GM10248 (cell line): ENCODE measurements at regions of chr15 and their contacts with region 1.

Region 1: DNA sequence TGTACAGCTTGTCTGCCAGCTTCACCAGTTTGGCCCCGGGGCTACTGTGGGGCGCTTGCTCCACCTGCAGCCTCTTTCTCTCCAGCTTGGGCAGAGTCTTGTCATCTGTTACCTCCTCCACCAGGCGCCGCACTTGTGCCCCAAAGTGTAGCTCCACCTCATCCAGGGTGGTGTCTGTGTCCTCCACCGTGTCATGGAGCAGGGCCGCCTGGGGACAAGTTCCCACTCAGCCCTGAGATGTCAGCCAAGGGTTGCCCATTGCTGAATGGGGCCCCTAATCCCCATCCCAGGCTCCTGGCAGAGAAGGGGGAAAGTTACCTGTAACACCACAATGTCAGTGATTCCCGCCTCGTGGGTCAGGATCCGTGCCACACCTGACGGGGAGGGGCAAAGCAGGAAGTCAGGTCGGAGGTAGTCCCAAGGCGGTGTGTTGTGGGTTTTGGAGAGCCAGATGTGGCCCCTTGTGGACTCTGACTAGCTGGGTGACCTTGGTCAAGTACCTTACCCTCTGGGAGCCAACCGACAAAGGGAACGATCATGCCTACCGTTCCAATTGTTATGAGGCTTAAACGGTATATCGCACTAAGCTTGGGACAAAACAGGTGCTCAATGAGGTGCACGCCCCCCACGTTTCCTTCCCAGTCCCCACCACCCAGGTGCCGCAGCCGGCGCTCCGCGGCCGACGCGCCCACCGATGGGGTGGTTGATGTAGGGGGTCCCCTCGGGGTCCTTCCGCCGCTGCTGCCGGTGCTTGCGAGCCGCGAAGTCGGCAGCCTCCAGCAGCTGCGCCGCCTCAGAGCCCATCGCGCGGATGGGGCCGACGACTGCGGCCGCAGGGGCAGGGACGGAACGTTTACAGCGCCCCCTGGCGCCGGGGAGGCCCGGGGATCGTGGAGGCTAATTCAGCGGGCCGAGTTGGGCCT is at the start of gene HDDC3:
- DNase-seq: peak; percentile 90
- CTCF ChIP-seq: peak; percentile 98

Region 2: GRCh38 chr15:90648137-90649070 is 283.6 kb before region 1 on chr15:
- CTCF ChIA-PET with region 1: interaction called, 29 read pairs
- POLR2A ChIA-PET with region 1: no interaction called
- DNase-seq: peak; percentile 75
- CTCF ChIP-seq: peak; percentile 79

Region 3: DNA sequence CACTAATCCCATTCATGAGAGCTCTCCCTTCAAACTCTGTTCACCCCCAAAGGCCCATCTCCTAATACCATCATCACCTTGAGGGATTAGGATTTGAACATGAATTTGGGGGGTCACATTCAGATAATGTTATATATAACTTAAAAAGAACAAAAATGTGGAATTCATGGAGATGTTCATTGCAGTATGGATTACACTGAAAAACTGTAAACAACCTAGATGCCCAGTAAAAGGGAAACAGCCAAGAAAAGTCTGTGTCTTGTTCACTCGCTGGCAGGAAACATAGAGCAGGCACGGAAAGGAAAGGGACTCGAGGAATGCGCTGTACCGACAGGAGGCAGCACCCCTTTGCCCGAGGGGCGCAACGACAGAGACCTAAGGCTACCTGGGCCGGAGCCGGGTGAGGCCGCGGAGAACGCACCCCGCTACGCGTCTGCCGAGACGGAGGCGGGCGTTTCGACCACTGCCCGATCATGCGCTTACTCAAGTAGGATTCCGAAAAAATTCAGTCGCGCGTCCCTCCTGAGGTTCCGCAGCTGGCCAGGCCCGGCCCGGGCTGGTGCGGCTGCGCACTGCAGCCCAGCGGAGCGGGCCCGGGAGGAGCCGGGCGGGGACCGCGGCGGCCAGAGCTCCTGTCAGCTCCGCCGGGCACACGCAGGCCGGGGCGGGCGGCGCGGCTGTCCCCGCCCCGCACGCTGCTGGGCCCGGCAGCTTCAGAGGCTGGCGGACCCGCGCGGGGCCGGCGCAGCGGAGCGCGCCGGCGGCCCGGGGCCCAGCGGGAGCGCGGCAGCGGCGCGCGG is 29.8 kb before region 1 on chr15:
- CTCF ChIA-PET with region 1: interaction called, 211 read pairs
- POLR2A ChIA-PET with region 1: interaction called, 7 read pairs
- DNase-seq: peak; percentile 92
- CTCF ChIP-seq: peak; percentile 86

Region 4: GRCh38 chr15:90970274-90970673 is 38.3 kb after region 1 on chr15:
- CTCF ChIA-PET with region 1: interaction called, 19 read pairs
- POLR2A ChIA-PET with region 1: interaction called, 7 read pairs
- DNase-seq: no peak
- CTCF ChIP-seq: no peak

Region 5: DNA sequence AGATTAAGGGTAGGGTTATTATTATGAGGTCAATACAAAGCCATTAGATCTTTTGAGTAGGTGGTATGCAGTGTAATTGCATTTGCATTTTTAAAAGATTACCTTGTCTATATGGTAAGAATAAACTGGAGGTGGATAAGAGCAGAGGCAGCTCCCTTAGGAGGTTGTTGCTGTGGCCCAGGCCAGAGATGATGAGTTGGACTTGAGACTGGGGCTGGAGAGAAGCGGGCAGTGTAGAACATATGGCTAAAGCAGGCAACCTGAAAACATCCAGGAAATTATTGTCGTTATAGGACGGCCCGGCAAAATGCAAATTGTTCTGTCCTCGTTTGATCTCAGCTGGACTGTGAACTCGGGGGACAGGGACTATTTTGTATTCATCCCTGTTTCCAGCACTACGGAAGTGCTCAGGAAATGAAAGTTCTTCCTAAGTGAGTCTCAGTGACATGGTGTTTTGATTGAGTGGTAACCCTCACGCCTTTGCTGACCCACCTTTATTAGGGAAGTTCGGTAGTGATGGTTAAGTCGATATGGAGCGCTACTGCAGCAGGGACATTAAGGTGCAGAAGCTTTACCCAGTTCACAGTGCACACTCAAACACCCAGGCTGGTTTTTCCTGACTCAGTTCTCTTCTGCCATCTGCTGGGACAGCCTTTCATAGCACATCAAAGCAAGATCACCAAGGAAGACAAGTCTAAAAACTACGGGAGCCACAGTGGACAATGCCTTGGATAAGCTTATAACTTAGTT is 117.6 kb after region 1 on chr15:
- CTCF ChIA-PET with region 1: interaction called, 20 read pairs
- POLR2A ChIA-PET with region 1: no interaction called
- DNase-seq: peak; percentile 54
- CTCF ChIP-seq: peak; percentile 76